T-cell (primary cell): ENCODE measurements at regions of chr18 and their contacts with region 1.

Region 1: DNA sequence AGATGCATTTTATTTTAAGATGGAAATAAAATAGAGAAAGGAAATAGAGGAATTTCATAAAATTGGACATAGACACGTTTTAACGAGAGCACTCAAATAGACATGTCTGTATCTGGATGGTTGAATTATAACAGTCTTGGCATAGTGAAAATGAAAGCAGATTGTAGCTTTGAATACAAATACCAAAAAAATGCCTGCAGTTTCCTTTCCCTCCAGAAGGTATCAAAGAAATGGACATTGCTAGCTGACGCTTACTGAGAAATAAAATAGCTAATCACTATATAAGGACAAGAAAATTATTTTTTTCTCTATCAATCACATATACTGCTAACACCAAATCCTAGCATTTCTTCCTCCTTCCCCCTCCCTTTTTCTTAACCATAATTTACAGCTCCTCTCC is 11.4 kb upstream of the MAPRE2 start:
- DNase-seq: peak in 1 of 35 experiments; percentile 66
- ATAC-seq: peak; percentile 49 to 63 (median 56)
- H3K4me3 ChIP-seq: peak overlapping the region; percentile 51 to 52
- H3K4me3 Mint-ChIP-seq: peak overlapping the region; percentile 82 to 92 (median 83)
- H3K27ac ChIP-seq: peak overlapping the region; percentile 98
- H3K27ac Mint-ChIP-seq: peak overlapping the region; percentile 98
- H3K4me1 ChIP-seq: peaks cover 26 to 43% of the 10 kb centered on the region in 2 experiments
- H3K4me1 Mint-ChIP-seq: peaks cover 64 to 67% (median 66%) of the 10 kb centered on the region in 3 donors
- H3K27me3 ChIP-seq: no peaks in the 10 kb centered on the region
- H3K27me3 Mint-ChIP-seq: no peaks in the 10 kb centered on the region

Region 2: GRCh38 chr18:34624551-34624950 is 405.2 kb before region 1 on chr18:
- CTCF ChIA-PET with region 1: no interaction called
- POLR2A ChIA-PET with region 1: no interaction called
- DNase-seq: no peak
- ATAC-seq: no peak
- H3K4me3 ChIP-seq: no peak overlapping the region
- H3K4me3 Mint-ChIP-seq: no peak overlapping the region
- H3K27ac ChIP-seq: no peak overlapping the region
- H3K27ac Mint-ChIP-seq: no peak overlapping the region
- H3K4me1 ChIP-seq: no peaks in the 10 kb centered on the region
- H3K4me1 Mint-ChIP-seq: no peaks in the 10 kb centered on the region
- H3K27me3 ChIP-seq: no peaks in the 10 kb centered on the region
- H3K27me3 Mint-ChIP-seq: peaks cover 0 to 3% of the 10 kb centered on the region in 2 donors

Region 3: GRCh38 chr18:35005963-35006577 is 23.7 kb before region 1 on chr18:
- CTCF ChIA-PET with region 1: interaction called, 5 to 17 read pairs
- POLR2A ChIA-PET with region 1: no interaction called
- DNase-seq: peak in 3 of 35 experiments; percentile 15 to 75 (median 36)
- ATAC-seq: peak in 3 of 4 experiments; percentile 75 to 80 (median 79)
- H3K4me3 ChIP-seq: no peak overlapping the region
- H3K4me3 Mint-ChIP-seq: no peak overlapping the region
- H3K27ac ChIP-seq: no peak overlapping the region
- H3K27ac Mint-ChIP-seq: no peak overlapping the region
- H3K4me1 ChIP-seq: no peaks in the 10 kb centered on the region
- H3K4me1 Mint-ChIP-seq: no peaks in the 10 kb centered on the region
- H3K27me3 ChIP-seq: no peaks in the 10 kb centered on the region
- H3K27me3 Mint-ChIP-seq: no peaks in the 10 kb centered on the region

Region 4: DNA sequence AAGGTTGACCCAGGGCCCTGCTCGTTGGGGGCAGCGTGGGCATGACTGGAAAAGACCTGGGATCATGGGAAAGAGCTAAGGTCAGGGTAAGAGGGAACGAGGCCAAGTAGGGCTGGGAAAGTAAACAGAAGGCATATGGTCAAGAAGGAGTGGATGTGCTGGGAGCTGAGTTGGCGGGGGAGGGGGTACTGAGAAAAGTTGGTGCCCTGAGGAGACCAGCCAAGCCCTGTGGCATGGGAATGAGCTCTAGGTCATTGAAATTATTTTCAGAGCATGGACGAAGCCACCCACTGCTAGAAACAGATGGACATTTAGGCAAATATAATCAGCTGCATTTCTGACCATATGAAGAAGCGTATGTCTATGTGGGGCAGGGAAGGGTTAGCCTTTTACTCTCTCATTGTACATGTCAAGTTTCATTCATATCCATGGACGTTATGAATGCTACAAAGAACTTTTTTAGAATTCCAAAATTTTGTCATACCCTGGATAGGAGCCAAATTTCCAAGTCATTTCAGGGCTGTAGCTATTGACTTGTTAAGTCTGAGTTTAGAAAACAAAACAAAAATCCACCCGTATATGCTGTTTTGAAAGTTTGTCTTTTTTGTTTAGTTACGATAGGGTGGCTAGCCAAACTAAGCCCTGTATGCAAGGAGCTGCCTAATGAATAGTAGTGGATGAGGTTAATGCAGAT is 30.5 kb after region 1 on chr18:
- CTCF ChIA-PET with region 1: interaction called, 3 to 22 read pairs
- POLR2A ChIA-PET with region 1: interaction called in 1 of 2 experiments, 5 read pairs
- DNase-seq: no peak
- ATAC-seq: no peak
- H3K4me3 ChIP-seq: no peak overlapping the region
- H3K4me3 Mint-ChIP-seq: no peak overlapping the region
- H3K27ac ChIP-seq: no peak overlapping the region
- H3K27ac Mint-ChIP-seq: no peak overlapping the region
- H3K4me1 ChIP-seq: peaks cover 0 to 19% of the 10 kb centered on the region in 2 experiments
- H3K4me1 Mint-ChIP-seq: peaks cover 74 to 84% (median 79%) of the 10 kb centered on the region in 3 donors
- H3K27me3 ChIP-seq: no peaks in the 10 kb centered on the region
- H3K27me3 Mint-ChIP-seq: no peaks in the 10 kb centered on the region

Region 5: DNA sequence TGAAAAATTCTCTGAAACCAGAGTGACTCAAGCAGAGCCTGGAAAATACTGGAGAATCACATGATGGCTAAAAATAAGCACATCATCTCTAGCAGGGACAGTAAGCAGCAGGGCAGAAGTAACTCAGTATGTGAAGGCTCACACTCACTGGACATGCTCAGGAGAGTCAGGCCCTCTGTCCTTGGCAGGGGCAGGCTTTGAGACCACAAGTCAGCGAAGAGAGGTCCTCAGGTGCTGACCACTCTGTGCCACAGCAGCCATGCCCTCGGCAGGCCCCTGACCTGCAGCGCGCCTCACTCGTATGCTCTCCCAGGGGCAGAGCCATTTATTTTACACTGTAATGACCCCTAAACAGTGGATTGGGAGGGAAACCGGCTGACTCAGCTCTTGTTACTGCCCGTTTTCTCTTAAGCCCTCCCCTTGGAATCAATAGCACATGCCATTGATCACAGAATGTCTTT is 88.2 kb after region 1 on chr18:
- CTCF ChIA-PET with region 1: interaction called, 5 to 7 read pairs
- POLR2A ChIA-PET with region 1: interaction called, 5 to 11 read pairs
- DNase-seq: no peak
- ATAC-seq: no peak
- H3K4me3 ChIP-seq: no peak overlapping the region
- H3K4me3 Mint-ChIP-seq: no peak overlapping the region
- H3K27ac ChIP-seq: no peak overlapping the region
- H3K27ac Mint-ChIP-seq: no peak overlapping the region
- H3K4me1 ChIP-seq: peaks cover 7 to 25% of the 10 kb centered on the region in 2 experiments
- H3K4me1 Mint-ChIP-seq: peaks cover 87 to 99% (median 88%) of the 10 kb centered on the region in 3 donors
- H3K27me3 ChIP-seq: no peaks in the 10 kb centered on the region
- H3K27me3 Mint-ChIP-seq: no peaks in the 10 kb centered on the region

Region 6: DNA sequence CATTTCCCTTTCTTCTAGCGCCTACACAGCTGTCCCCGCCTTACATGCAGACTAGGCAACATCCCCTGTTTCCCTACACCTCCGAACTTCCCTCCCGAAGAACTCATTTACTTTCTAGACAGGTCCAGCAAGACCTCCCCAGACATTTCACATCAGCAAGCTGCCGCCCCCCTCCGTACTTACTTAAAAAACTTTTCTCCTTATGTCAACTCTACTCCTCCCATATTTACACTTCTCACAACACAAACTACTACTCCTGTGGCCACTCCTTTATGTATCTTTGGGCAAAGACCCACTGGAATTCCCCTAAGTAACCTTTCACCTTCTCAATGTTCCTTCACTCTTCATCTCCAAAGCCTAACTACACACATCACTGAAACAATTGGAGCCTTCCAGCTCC is 190.7 kb after region 1 on chr18:
- CTCF ChIA-PET with region 1: no interaction called
- POLR2A ChIA-PET with region 1: no interaction called
- DNase-seq: no peak
- ATAC-seq: no peak
- H3K4me3 ChIP-seq: no peak overlapping the region
- H3K4me3 Mint-ChIP-seq: no peak overlapping the region
- H3K27ac ChIP-seq: no peak overlapping the region
- H3K27ac Mint-ChIP-seq: no peak overlapping the region
- H3K4me1 ChIP-seq: no peaks in the 10 kb centered on the region
- H3K4me1 Mint-ChIP-seq: no peaks in the 10 kb centered on the region
- H3K27me3 ChIP-seq: no peaks in the 10 kb centered on the region
- H3K27me3 Mint-ChIP-seq: peaks cover 3 to 6% of the 10 kb centered on the region in 2 donors

Region 7: GRCh38 chr18:35355140-35355618 is 325.4 kb after region 1 on chr18:
- CTCF ChIA-PET with region 1: interaction called in 1 of 2 experiments, 11 read pairs
- POLR2A ChIA-PET with region 1: no interaction called
- DNase-seq: peak; percentile 24 to 78 (median 54)
- ATAC-seq: peak; percentile 81 to 98 (median 94)
- H3K4me3 ChIP-seq: no peak overlapping the region
- H3K4me3 Mint-ChIP-seq: no peak overlapping the region
- H3K27ac ChIP-seq: no peak overlapping the region
- H3K27ac Mint-ChIP-seq: no peak overlapping the region
- H3K4me1 ChIP-seq: no peaks in the 10 kb centered on the region
- H3K4me1 Mint-ChIP-seq: peaks cover 0 to 3% (median 0%) of the 10 kb centered on the region in 3 donors
- H3K27me3 ChIP-seq: peaks cover 0 to 3% of the 10 kb centered on the region in 2 experiments
- H3K27me3 Mint-ChIP-seq: no peaks in the 10 kb centered on the region